Activated CD4-positive, alpha-beta T cell treated with anti-CD3 and anti-CD28 coated beads for 36 hours (primary cell): ENCODE measurements at regions of chr1 and their contacts with region 1.

Region 1: DNA sequence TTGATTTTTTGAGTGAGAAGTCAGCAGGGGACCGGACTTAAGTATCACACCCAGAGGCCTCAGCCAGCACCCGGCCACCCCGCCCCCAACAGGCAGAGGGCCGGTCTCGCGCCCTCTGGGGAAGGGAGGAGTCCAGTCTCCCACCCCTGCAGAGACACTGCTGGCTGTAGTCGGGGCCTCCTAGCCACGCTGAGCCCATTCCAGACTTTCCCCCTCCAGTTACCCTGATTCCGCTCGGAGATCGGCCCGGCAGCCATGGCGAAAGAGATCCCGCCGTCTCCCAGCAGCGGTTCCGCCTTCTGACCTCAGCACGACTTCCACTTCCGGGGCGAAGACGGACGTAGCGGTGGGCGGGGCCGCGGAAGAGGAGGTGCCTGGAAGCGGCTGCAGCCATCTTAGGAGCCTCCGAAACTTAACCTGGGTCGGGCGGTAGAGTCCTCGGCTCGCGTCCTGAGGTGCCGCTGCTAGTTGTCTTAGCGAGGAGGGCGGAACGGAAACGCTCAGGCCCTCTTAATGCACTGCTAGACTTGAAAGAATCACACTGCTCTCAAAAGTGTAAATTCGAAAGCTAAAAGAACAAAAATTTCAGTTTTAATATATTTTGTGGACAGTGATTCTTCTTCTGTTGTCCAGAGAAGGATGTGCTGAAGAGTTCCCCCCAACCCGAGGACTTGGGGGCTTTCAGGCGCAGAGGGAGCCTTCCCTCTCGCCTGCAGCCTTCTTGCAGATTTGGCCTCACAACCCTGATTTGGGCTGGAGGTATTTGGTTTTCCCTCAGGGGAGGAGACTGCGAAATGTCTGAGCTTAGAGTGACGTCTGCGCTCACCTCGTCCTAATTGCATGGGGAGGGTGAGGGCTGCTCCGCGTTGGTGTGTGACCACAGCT is at the start of gene SF3B4:
- DNase-seq: peak; percentile 97
- ATAC-seq: peak; percentile 97
- H3K4me3 Mint-ChIP-seq: peak within 1 kb of the TSS; percentile 97
- H3K27ac Mint-ChIP-seq: peak within 1 kb of the TSS; percentile 96
- H3K4me1 Mint-ChIP-seq: peaks cover 43% of the 10 kb centered on the region
- H3K27me3 Mint-ChIP-seq: peaks cover 3% of the 10 kb centered on the region
- total RNA-seq, gene SF3B4: 68.6 to 71.9 TPM

Region 2: GRCh38 chr1:149906570-149907075 is 21.1 kb before region 1 on chr1:
- CTCF ChIA-PET with region 1: no interaction called
- POLR2A ChIA-PET with region 1: no interaction called
- intact Hi-C with region 1: no loop called
- DNase-seq: no peak
- ATAC-seq: no peak
- H3K4me3 Mint-ChIP-seq: no peak overlapping the region
- H3K27ac Mint-ChIP-seq: no peak overlapping the region
- H3K4me1 Mint-ChIP-seq: no peaks in the 10 kb centered on the region
- H3K27me3 Mint-ChIP-seq: no peaks in the 10 kb centered on the region

Region 3: DNA sequence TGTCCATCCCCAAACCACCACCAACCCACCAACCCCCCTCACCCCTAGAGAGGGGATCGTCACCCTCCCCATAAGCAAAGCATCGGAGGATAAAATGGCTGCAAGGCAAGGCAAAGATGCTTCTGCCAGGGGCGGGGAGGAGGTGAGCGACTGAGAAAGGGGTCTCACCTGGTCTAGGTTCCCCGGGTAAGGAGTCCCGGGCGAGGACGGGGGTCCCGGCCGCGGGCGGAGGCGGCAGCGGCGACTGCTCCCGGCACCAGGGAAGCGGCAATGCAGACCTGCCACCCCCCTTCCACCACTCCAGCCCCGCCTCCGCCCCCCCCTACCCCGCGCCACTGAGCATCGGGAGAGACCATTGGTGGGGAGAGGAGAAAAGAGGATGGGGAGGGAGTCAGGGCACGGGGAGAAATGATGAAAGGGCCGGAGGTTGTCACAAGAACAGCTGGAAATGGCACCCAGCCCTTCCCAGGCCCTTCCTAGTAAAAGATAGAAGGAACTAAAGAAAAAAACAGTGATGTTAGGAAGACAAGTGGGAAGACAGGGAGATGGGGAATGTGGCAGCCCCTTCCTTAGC is 10.1 kb before region 1 on chr1 and contains the start of gene SV2A:
- CTCF ChIA-PET with region 1: no interaction called
- POLR2A ChIA-PET with region 1: interaction called, 3 read pairs
- intact Hi-C with region 1: loop called in 1 of 2 experiments (anchors 1 kb)
- DNase-seq: peak; percentile 71
- ATAC-seq: peak; percentile 85
- H3K4me3 Mint-ChIP-seq: peak within 1 kb of the TSS; percentile 78
- H3K27ac Mint-ChIP-seq: no peak within 1 kb of the TSS
- H3K4me1 Mint-ChIP-seq: peaks cover 19% of the 10 kb centered on the region
- H3K27me3 Mint-ChIP-seq: peaks cover 2% of the 10 kb centered on the region
- total RNA-seq, gene SV2A: 7.8 to 8.5 TPM

Region 4: GRCh38 chr1:150051089-150051373 is 123.3 kb after region 1 on chr1:
- CTCF ChIA-PET with region 1: no interaction called
- POLR2A ChIA-PET with region 1: no interaction called
- intact Hi-C with region 1: loop called in 1 of 2 experiments (anchors 1 kb)
- DNase-seq: no peak
- ATAC-seq: no peak
- H3K4me3 Mint-ChIP-seq: no peak overlapping the region
- H3K27ac Mint-ChIP-seq: no peak overlapping the region
- H3K4me1 Mint-ChIP-seq: peaks cover 2% of the 10 kb centered on the region
- H3K27me3 Mint-ChIP-seq: peaks cover 3% of the 10 kb centered on the region

Region 5: GRCh38 chr1:150176593-150176992 is 248.8 kb after region 1 on chr1:
- CTCF ChIA-PET with region 1: no interaction called
- POLR2A ChIA-PET with region 1: no interaction called
- intact Hi-C with region 1: no loop called
- DNase-seq: no peak
- ATAC-seq: no peak
- H3K4me3 Mint-ChIP-seq: no peak overlapping the region
- H3K27ac Mint-ChIP-seq: no peak overlapping the region
- H3K4me1 Mint-ChIP-seq: no peaks in the 10 kb centered on the region
- H3K27me3 Mint-ChIP-seq: no peaks in the 10 kb centered on the region